Sigmoid colon (tissue), 7 donors: ENCODE measurements at regions of chr1 and their contacts with region 1.

Region 1: DNA sequence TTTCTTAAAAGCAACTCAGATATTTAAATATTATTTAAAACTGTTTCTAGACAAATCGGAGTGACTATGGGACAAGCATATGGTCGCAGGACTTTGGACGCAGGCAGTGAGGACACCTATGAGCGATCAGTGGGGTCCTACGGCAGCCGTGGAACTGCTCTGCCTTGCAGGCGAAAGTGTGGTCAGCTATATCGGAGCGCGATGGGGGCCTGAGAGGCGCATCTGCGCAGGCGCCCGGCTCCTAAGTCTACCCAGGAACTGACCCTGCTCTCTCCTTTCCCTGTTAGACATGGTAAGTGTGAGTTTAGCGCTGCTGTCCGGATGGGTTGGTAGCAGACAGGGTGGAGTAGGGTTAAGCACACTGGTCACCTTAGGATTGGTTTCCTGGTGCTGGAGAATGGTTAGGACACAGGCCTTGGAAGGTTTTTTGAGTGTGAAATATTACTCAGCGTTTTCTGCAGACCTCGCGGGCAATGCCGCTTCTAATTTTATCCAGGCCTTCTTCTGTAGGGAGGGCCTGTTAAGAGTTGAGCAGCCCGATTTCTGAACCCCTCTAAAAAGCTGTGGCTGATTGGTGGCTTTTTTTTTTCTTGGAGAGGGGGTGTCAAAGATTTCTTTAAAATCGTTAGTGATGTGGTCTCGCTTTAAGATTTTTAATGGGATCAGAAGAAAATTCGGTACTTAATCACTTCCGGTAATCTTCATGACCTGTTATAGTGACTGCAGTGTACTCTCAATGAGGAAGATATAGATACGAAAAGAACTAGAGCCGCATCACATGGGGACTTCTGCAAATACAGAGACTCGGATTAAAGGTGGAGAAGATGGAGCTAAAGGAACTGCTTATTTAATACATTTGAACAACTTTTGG is at the start of gene RABGGTB:
- DNase-seq: peak; percentile 96
- H3K4me3 ChIP-seq: peak within 1 kb of the TSS; percentile 50 to 71 (median 70)
- H3K27ac ChIP-seq: peak within 1 kb of the TSS; percentile 79 to 85 (median 85)
- H3K4me1 ChIP-seq: peaks cover 5 to 49% (median 38%) of the 10 kb centered on the region in 4 donors
- H3K27me3 ChIP-seq: no peaks in the 10 kb centered on the region
- CTCF ChIP-seq: no peak
- EP300 ChIP-seq: no peak
- POLR2A ChIP-seq: peak; percentile 64 to 81
- total RNA-seq, gene RABGGTB: 33.2 to 65.8 (median 52.5) TPM

Region 2: DNA sequence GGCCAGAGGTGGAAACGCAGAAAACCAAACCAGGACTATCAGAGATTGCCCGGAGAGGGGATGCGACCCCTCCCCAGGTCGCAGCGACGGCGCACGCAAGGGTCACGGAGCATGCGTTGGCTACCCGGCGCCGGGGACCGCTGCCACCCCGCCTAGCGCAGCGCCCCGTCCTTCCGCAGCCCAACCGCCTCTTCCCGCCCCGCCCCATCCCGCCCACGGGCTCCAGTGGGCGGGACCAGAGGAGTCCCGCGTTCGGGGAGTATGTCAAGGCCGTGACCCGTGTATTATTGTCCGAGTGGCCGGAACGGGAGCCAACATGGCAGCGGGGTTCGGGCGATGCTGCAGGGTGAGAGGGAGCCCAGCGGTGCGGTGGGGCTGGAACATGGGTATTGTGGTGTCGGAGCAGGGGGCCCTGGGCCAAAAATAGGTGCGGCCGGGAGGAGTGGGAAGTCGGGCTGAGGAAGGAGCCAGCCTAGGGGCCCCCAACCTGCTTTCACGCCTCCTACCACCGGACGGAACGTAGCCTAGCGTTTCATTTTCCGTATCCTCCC is 61.7 kb before region 1 on chr1 and contains the start of gene ACADM:
- intact Hi-C with region 1: loop called (anchors 1 kb)
- DNase-seq: peak; percentile 91
- H3K4me3 ChIP-seq: peak within 1 kb of the TSS; percentile 72 to 87 (median 78)
- H3K27ac ChIP-seq: peak within 1 kb of the TSS; percentile 88 to 94 (median 92)
- H3K4me1 ChIP-seq: peaks cover 0 to 35% (median 18%) of the 10 kb centered on the region in 4 donors
- H3K27me3 ChIP-seq: no peaks in the 10 kb centered on the region
- CTCF ChIP-seq: no peak
- EP300 ChIP-seq: no peak
- POLR2A ChIP-seq: peak; percentile 55 to 67
- total RNA-seq, gene ACADM: 40.7 to 68.6 (median 60.7) TPM

Region 3: DNA sequence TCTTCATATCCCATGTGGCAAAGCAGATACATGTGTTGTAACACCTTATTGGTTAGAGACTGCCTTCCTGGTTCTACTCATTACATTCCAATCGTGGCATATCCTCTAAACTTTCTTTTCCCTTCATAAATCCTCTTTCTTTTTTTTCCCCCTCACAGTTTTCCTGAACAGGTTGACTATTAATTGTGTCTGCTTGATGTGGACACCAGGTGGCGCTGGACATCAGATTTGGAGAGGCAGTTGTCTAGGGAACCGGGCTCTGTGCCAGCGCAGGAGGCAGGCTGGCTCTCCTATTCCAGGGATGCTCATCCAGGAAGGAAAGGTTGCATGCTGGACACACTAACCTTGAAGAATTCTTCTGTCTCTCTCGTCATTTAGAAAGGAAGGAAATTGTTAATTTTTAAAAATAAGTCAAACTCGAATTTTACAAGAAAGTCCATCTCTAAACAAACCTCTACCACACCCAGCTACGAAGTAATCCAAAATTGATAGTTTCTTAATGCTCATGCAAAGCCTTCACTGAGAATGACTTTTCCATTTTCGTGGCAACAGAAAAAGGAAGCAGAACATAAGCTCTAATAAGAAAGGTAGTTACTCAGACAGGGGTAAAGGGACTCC is 205.4 kb after region 1 on chr1:
- intact Hi-C with region 1: no loop called
- DNase-seq: peak; percentile 94
- H3K4me3 ChIP-seq: no peak overlapping the region
- H3K27ac ChIP-seq: no peak overlapping the region
- H3K4me1 ChIP-seq: no peaks in the 10 kb centered on the region
- H3K27me3 ChIP-seq: no peaks in the 10 kb centered on the region
- CTCF ChIP-seq: peak; percentile 71 to 81 (median 74)
- EP300 ChIP-seq: no peak
- POLR2A ChIP-seq: no peak